Right lobe of liver (tissue), 6 donors: ENCODE measurements at regions of chr9 and their contacts with region 1.

Region 1: GRCh38 chr9:37784616-37785483 is at the start of gene EXOSC3:
- DNase-seq: peak; percentile 90 to 93 (median 93)
- ATAC-seq: peak; percentile 95 to 97 (median 97)
- H3K4me3 ChIP-seq: peak within 1 kb of the TSS; percentile 78 to 95 (median 91)
- H3K27ac ChIP-seq: peak within 1 kb of the TSS; percentile 25 to 48 (median 30)
- H3K4me1 ChIP-seq: peaks cover 0 to 14% (median 2%) of the 10 kb centered on the region in 4 donors
- H3K27me3 ChIP-seq: no peaks in the 10 kb centered on the region
- CTCF ChIP-seq: no peak
- POLR2A ChIP-seq: peak; percentile 63
- total RNA-seq, gene EXOSC3: 13.1 to 17.1 (median 14.7) TPM

Region 2: GRCh38 chr9:37729499-37729898 is 55.4 kb before region 1 on chr9:
- intact Hi-C with region 1: loop called in 1 of 2 experiments (anchors 10 kb)
- DNase-seq: no peak
- ATAC-seq: no peak
- H3K4me3 ChIP-seq: no peak overlapping the region
- H3K27ac ChIP-seq: no peak overlapping the region
- H3K4me1 ChIP-seq: no peaks in the 10 kb centered on the region
- H3K27me3 ChIP-seq: no peaks in the 10 kb centered on the region
- CTCF ChIP-seq: no peak
- POLR2A ChIP-seq: no peak

Region 3: DNA sequence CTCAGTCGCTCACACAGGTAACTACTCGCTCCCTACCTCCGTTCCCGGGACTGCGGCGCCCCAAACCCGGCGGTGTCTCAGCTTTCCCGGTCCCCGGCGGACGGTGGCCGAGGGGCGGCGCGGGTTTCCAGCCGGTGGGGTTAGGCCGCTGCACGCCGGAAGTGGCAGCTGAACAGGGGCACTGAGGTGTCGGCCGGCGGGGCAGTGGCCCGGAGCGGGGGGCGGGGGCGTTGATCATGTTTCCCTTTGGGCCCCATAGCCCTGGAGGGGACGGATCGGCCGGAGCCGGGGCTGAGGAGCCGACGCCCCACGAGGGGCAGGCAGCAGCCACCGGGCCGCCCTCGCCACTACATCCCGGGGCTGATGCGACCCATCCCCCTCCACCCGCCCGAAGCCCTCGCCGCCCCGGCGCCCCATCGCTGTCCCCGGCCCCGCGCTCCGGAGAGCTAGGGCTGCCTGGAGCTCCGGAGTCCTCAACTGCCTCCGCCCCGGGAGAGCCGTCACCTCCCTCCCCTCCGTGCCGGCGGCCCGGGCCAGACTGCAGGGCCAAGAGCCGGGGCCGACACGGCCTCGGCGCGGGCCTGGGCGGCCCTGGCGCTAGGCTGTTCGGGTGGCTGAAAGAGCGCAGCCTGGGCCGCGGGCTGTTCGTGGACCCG is 15.9 kb after region 1 on chr9 and contains the start of gene DCAF10:
- intact Hi-C with region 1: loop called in 1 of 2 experiments (anchors 2 kb)
- DNase-seq: peak; percentile 89 to 90 (median 90)
- ATAC-seq: peak; percentile 95 to 97 (median 96)
- H3K4me3 ChIP-seq: peak within 1 kb of the TSS; percentile 72 to 98 (median 94)
- H3K27ac ChIP-seq: peak within 1 kb of the TSS; percentile 72 to 89 (median 81)
- H3K4me1 ChIP-seq: peaks cover 0 to 16% (median 6%) of the 10 kb centered on the region in 4 donors
- H3K27me3 ChIP-seq: no peaks in the 10 kb centered on the region
- CTCF ChIP-seq: peak in 1 of 4 donors; percentile 17
- POLR2A ChIP-seq: peak; percentile 74
- total RNA-seq, gene DCAF10: 20.1 to 28.3 (median 23.1) TPM